T-cell (primary cell): ENCODE measurements at regions of chr2 and their contacts with region 1.

Region 1: GRCh38 chr2:64234785-64235184 is 90.6 kb upstream of the PELI1 start:
- DNase-seq: no peak
- ATAC-seq: no peak
- H3K4me3 ChIP-seq: no peak overlapping the region
- H3K4me3 Mint-ChIP-seq: no peak overlapping the region
- H3K27ac ChIP-seq: no peak overlapping the region
- H3K27ac Mint-ChIP-seq: no peak overlapping the region
- H3K4me1 ChIP-seq: no peaks in the 10 kb centered on the region
- H3K4me1 Mint-ChIP-seq: peaks cover 0 to 6% (median 0%) of the 10 kb centered on the region in 3 donors
- H3K27me3 ChIP-seq: no peaks in the 10 kb centered on the region
- H3K27me3 Mint-ChIP-seq: peaks cover 0 to 4% of the 10 kb centered on the region in 2 donors

Region 2: DNA sequence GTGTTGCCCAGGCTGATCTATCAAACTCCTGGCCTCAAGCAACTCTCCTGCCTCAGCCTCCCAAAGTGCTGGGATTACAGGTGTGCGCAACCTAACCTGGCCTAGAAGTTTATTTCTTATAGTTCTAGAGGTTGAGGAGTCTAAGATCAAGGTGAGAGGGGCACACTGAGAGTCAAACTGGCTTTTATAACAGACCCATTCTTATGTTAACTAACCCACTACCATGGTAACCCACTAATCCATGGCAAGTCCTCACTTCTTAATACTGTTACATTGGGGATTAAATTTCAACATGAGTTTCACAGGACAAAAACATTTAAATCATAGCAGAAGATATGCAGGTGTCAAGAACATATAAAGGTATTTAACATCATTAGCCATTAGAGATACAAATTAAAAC is 595.4 kb before region 1 on chr2:
- CTCF ChIA-PET with region 1: no interaction called
- POLR2A ChIA-PET with region 1: no interaction called
- DNase-seq: no peak
- ATAC-seq: no peak
- H3K4me3 ChIP-seq: no peak overlapping the region
- H3K4me3 Mint-ChIP-seq: no peak overlapping the region
- H3K27ac ChIP-seq: no peak overlapping the region
- H3K27ac Mint-ChIP-seq: no peak overlapping the region
- H3K4me1 ChIP-seq: no peaks in the 10 kb centered on the region
- H3K4me1 Mint-ChIP-seq: no peaks in the 10 kb centered on the region
- H3K27me3 ChIP-seq: no peaks in the 10 kb centered on the region
- H3K27me3 Mint-ChIP-seq: peaks cover 5% of the 10 kb centered on the region in 2 donors

Region 3: GRCh38 chr2:64203858-64204632 is 30.7 kb before region 1 on chr2:
- CTCF ChIA-PET with region 1: no interaction called
- POLR2A ChIA-PET with region 1: no interaction called
- DNase-seq: peak in 29 of 35 experiments; percentile 10 to 86 (median 27)
- ATAC-seq: peak; percentile 40 to 73 (median 44)
- H3K4me3 ChIP-seq: peak overlapping the region; percentile 24 to 26
- H3K4me3 Mint-ChIP-seq: peak overlapping the region; percentile 62 to 84 (median 67)
- H3K27ac ChIP-seq: peak overlapping the region; percentile 85
- H3K27ac Mint-ChIP-seq: peak overlapping the region; percentile 91 to 96
- H3K4me1 ChIP-seq: peaks cover 40 to 53% of the 10 kb centered on the region in 2 experiments
- H3K4me1 Mint-ChIP-seq: peaks cover 77 to 86% (median 82%) of the 10 kb centered on the region in 3 donors
- H3K27me3 ChIP-seq: no peaks in the 10 kb centered on the region
- H3K27me3 Mint-ChIP-seq: no peaks in the 10 kb centered on the region

Region 4: GRCh38 chr2:64317707-64318475 is 83.1 kb after region 1 on chr2:
- CTCF ChIA-PET with region 1: no interaction called
- POLR2A ChIA-PET with region 1: interaction called in 1 of 2 experiments, 10 read pairs
- DNase-seq: no peak
- ATAC-seq: no peak
- H3K4me3 ChIP-seq: no peak overlapping the region
- H3K4me3 Mint-ChIP-seq: no peak overlapping the region
- H3K27ac ChIP-seq: no peak overlapping the region
- H3K27ac Mint-ChIP-seq: no peak overlapping the region
- H3K4me1 ChIP-seq: peaks cover 3 to 9% of the 10 kb centered on the region in 2 experiments
- H3K4me1 Mint-ChIP-seq: peaks cover 0 to 8% (median 6%) of the 10 kb centered on the region in 3 donors
- H3K27me3 ChIP-seq: no peaks in the 10 kb centered on the region
- H3K27me3 Mint-ChIP-seq: peaks cover 0 to 2% of the 10 kb centered on the region in 2 donors